ENCODE measurements at regions of chr16 and their contacts with region 1.

Region 1: DNA sequence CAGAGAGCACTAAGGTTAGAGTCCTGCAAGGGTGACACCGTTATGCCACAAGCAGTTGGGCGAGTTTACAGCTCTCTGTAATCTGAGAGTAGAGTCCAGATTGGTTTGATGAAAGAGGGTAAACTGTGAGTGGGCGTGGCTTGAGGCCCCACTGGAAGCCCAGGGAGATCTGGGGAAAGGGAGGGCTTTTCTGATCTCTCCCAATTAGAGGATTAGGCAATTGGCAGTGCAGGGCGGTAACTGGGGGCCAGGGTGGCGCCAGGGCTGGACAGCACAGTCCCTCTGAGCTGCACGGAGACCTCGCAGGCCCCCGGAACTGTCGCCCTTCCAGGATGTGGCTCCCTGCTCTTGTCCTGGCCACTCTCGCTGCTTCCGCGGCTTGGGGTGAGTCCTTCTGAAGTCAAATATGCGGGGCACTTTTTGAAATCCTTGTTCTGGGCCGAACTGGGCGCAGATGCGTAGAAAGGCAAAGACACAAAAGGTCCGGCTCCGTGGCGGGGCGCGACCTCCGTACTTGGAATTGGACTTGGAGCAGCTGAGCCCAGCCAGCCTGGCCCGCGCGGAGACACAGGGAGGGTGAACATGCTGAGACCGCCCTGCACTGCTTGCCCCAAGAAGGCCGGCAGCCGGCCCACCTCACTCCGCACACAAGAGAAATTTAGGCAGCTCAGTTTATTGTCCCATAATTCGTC is 72.4 kb downstream of the CES1 start:
- DNase-seq: peak; percentile 84
- ATAC-seq: peak; percentile 90

Region 2: DNA sequence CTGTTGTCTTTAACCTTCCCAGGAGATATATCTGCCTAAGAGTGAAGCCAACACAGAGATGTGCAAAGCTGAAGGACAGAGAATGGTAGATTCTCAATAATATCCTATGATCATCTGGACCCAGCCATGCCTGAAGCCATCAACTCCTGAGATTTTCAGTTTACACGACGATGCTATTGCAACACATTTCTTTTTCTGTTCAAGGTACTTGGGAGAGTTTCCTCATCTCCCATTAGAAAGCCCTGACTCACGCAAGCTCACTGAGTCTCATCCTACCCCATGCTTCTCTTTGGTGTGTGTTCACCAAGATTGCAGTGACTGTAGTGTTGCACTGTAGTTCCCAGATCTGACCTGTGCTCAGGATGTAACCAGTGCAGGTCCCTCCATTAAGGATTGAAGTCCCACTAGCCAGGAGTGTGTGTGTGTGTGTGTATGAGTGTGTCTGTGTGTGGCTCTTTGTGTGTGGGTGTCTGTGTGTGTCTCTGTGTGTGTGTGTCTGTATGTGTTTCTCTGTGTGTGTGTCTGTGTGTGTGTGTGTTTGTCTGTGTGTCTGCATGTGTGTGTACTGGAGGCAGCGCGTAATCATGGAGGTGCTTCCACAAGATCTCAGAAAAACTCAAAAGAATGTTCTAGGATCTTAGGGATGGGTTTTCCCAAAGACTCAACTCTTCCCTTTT is 56.9 kb after region 1 on chr16:
- intact Hi-C with region 1: no loop called
- DNase-seq: no peak
- ATAC-seq: no peak

Region 3: GRCh38 chr16:55832758-55833540 is 72.5 kb after region 1 on chr16 and contains the start of gene CES1:
- intact Hi-C with region 1: loop called (anchors 2 kb)
- DNase-seq: peak; percentile 92
- ATAC-seq: peak; percentile 91
- total RNA-seq, gene CES1: 52.2 TPM